ENCODE measurements at regions of chr12 and their contacts with region 1.

Region 1: DNA sequence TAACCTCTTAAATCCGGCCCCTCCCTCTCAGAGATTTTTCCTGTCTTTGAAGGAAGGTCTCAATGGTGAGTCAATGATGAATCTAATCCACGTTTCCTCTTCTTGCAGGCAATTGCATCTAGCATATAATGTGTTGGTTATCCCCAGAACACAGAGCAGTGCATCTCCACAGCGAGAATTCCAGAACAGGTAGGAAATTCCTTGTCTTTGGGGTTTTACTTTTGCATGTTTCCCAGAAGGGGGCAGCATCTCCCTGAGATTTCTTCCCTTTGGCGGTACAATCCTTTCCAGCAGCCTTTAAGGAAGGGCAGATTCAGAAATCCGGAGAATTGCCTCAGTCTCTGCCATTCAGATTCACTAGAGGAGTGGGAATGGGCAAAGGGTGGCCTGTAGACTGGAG is 128.0 kb downstream of the KCNA5 start:
- DNase-seq: no peak
- H3K4me3 ChIP-seq: no peak overlapping the region
- CTCF ChIP-seq: peak; percentile 61

Region 2: DNA sequence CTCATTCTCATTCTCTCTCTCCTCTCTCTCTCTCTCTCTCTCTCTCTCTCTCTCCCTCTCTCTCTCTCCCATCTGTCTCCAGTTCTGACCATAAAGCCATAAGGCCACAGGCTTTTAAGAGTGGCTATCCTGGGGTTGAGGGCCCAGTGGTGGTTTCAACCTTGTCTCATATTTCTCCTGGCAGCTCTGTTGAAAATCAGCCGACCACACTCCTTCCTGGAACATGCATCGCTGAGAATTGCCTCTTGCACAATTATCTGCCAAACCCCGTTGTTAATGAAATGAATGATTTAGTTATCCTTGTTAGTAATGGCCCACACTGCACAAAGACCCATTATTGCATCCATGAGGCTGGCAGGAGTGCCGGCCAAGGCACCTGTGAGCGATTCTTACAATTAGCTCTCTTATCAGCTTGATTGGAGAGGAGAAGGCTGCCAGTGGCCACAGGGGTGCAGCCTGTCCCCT is 158.4 kb before region 1 on chr12:
- CTCF ChIA-PET with region 1: no interaction called
- POLR2A ChIA-PET with region 1: no interaction called
- DNase-seq: no peak
- H3K4me3 ChIP-seq: no peak overlapping the region
- CTCF ChIP-seq: no peak

Region 3: GRCh38 chr12:5191803-5192535 is 20.3 kb after region 1 on chr12:
- CTCF ChIA-PET with region 1: interaction called, 13 read pairs
- POLR2A ChIA-PET with region 1: no interaction called
- DNase-seq: no peak
- H3K4me3 ChIP-seq: no peak overlapping the region
- CTCF ChIP-seq: no peak

Region 4: GRCh38 chr12:5280091-5280490 is 108.4 kb after region 1 on chr12:
- CTCF ChIA-PET with region 1: no interaction called
- POLR2A ChIA-PET with region 1: no interaction called
- DNase-seq: no peak
- H3K4me3 ChIP-seq: no peak overlapping the region
- CTCF ChIP-seq: no peak